ENCODE measurements at regions of chr1 and their contacts with region 1.

Region 1: DNA sequence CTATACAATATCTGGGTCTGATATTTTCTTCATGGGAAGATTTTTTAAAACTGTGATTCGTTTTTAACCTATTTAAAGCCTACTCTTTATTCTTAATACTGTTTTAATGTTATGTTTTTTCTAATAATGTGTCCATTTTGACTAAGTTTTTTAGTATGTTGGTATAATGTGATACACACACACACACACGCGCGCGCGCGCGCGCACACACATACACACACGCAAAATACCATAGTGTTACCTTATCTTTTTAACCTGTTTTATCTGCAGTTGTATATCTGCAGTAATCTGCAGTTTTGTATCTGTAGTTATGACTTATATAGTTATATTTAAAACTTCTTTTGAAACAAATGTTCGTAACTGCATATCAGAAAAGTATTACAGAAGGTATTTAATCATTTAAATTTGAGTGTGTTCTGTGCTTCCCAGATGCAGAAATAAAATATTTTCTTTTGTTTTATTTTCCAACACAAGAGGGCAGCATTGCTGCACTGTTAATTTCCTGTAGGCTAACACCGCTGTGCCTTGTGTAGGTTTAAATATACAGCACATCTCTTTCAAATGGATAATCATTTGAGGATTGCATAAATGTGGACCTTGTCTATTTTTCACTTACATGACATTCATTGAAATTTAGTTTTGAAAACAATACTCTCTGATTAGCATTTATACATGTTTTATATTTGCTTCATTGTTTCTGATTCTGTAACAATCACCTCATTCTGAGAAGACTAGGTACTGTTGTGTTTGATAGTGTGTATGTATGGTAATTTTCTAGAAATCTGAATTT is 166.1 kb downstream of the PDE4B start:
- DNase-seq: peak; percentile 69
- ATAC-seq: no peak
- H3K4me3 ChIP-seq: no peak overlapping the region
- H3K4me3 Mint-ChIP-seq: no peak overlapping the region
- H3K27ac ChIP-seq: no peak overlapping the region
- H3K27ac Mint-ChIP-seq: no peak overlapping the region
- H3K4me1 ChIP-seq: no peaks in the 10 kb centered on the region
- H3K4me1 Mint-ChIP-seq: no peaks in the 10 kb centered on the region
- H3K27me3 ChIP-seq: no peaks in the 10 kb centered on the region
- H3K27me3 Mint-ChIP-seq: peaks cover 8% of the 10 kb centered on the region
- CTCF ChIP-seq: peak; percentile 90

Region 2: GRCh38 chr1:66374561-66375111 is 415.9 kb after region 1 on chr1:
- CTCF ChIA-PET with region 1: interaction called, 3 read pairs
- POLR2A ChIA-PET with region 1: no interaction called
- intact Hi-C with region 1: loop called (anchors 10 kb)
- DNase-seq: peak; percentile 90
- ATAC-seq: peak; percentile 73
- H3K4me3 ChIP-seq: peak overlapping the region in 1 of 5 experiments; percentile 13
- H3K4me3 Mint-ChIP-seq: peak overlapping the region; percentile 69
- H3K27ac ChIP-seq: peak overlapping the region; percentile 83 to 90
- H3K27ac Mint-ChIP-seq: peak overlapping the region; percentile 81
- H3K4me1 ChIP-seq: peaks cover 82 to 89% of the 10 kb centered on the region in 2 donors
- H3K4me1 Mint-ChIP-seq: peaks cover 86% of the 10 kb centered on the region
- H3K27me3 ChIP-seq: no peaks in the 10 kb centered on the region
- H3K27me3 Mint-ChIP-seq: no peaks in the 10 kb centered on the region
- CTCF ChIP-seq: no peak

Region 3: DNA sequence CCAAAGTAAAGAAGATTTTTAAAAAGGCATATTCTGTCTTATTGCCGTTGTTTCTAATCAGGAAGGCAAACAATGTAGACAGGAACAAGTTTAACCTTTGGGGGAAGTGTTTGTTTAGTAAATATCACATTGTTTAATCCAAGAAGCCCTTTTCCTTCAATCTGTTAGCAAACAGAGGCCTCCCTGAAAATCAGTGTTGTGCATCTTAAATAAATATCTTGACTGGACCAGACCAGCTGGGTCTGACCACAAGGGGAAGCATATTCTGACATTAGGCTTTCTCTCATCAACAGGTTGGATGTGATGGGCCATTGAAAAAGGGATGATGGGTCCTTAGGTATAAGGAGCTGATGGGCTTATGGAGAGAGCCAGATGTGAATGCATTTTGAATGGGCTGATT is 493.4 kb after region 1 on chr1:
- CTCF ChIA-PET with region 1: interaction called, 171 read pairs
- POLR2A ChIA-PET with region 1: no interaction called
- intact Hi-C with region 1: no loop called
- DNase-seq: no peak
- ATAC-seq: no peak
- H3K4me3 ChIP-seq: no peak overlapping the region
- H3K4me3 Mint-ChIP-seq: no peak overlapping the region
- H3K27ac ChIP-seq: no peak overlapping the region
- H3K27ac Mint-ChIP-seq: no peak overlapping the region
- H3K4me1 ChIP-seq: no peaks in the 10 kb centered on the region
- H3K4me1 Mint-ChIP-seq: no peaks in the 10 kb centered on the region
- H3K27me3 ChIP-seq: no peaks in the 10 kb centered on the region
- H3K27me3 Mint-ChIP-seq: no peaks in the 10 kb centered on the region
- CTCF ChIP-seq: no peak

Region 4: DNA sequence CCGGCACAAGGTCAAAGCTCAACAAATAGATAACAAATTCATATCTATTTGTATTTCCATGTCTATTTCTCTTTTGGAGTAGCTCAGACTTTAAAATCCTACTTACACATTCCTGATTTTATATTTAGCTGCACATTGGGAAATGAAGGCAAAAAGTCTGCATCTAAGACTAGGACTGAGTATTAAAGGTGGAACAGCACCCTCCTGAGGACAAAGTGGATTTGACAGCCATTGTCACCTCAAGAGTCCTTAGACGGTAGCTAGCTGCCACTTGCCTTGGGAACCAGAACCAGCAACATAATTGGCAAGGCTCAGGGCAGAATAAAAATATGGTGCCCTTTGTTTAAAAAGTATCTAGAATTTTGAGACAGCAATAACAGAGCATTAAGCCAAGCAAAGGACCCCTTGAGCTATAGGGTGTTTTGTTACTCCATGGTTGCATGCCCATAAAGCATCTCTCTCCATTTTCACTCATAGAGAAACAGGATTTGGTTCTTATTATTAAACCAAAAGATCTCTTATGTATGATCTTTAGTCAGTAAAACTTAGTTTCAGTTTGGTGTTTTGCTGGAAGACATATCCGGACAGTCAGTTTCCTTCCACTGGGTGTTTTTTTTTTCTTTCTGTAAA is 545.2 kb after region 1 on chr1:
- CTCF ChIA-PET with region 1: interaction called, 29 read pairs
- POLR2A ChIA-PET with region 1: no interaction called
- intact Hi-C with region 1: loop called (anchors 1 kb)
- DNase-seq: peak; percentile 49
- ATAC-seq: no peak
- H3K4me3 ChIP-seq: no peak overlapping the region
- H3K4me3 Mint-ChIP-seq: no peak overlapping the region
- H3K27ac ChIP-seq: no peak overlapping the region
- H3K27ac Mint-ChIP-seq: no peak overlapping the region
- H3K4me1 ChIP-seq: no peaks in the 10 kb centered on the region
- H3K4me1 Mint-ChIP-seq: no peaks in the 10 kb centered on the region
- H3K27me3 ChIP-seq: no peaks in the 10 kb centered on the region
- H3K27me3 Mint-ChIP-seq: peaks cover 20% of the 10 kb centered on the region
- CTCF ChIP-seq: peak; percentile 72

Region 5: DNA sequence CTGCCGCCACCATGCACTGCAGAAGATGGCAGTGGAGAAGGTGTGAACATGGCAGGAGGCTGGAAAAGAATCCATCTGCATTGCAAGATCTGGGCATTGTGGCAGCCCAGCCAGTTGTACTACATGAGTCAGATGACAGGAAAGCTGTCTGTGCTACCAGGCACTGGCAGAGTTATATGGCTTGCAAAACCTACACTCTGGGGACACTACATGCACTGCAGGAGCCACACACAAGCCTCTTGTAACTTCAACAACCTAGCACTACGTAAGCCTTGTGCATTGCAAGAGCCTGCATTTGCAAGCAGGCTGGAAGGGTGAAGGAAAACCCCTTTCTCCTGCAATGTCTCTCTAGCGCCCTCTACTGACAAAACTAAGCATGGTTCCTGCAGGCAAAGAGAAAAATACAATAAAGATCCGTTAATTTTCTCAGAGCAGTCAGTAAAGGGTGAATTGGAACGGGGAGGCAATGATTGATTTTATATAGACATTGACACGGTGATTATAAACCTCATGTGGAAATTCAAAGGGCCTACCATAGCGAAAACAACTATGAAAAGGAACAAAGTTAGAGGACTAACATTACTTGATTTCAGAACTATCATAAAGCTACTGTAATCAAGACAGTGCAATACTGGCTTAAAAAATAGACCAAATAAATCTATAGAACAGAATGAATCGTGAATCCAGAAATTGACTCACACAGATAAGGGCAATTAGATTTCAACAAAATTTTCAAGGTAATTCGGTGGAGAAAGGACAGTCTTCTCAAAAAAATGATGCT is 767.3 kb after region 1 on chr1:
- CTCF ChIA-PET with region 1: interaction called, 22 read pairs
- POLR2A ChIA-PET with region 1: no interaction called
- intact Hi-C with region 1: loop called (anchors 1 kb)
- DNase-seq: peak; percentile 69
- ATAC-seq: no peak
- H3K4me3 ChIP-seq: no peak overlapping the region
- H3K4me3 Mint-ChIP-seq: no peak overlapping the region
- H3K27ac ChIP-seq: no peak overlapping the region
- H3K27ac Mint-ChIP-seq: no peak overlapping the region
- H3K4me1 ChIP-seq: no peaks in the 10 kb centered on the region
- H3K4me1 Mint-ChIP-seq: peaks cover 8% of the 10 kb centered on the region
- H3K27me3 ChIP-seq: no peaks in the 10 kb centered on the region
- H3K27me3 Mint-ChIP-seq: peaks cover 53% of the 10 kb centered on the region
- CTCF ChIP-seq: peak; percentile 93

Measured in B cell (primary cell).